A549 (cell line): ENCODE measurements at regions of chr22 and their contacts with region 1.

Region 1: DNA sequence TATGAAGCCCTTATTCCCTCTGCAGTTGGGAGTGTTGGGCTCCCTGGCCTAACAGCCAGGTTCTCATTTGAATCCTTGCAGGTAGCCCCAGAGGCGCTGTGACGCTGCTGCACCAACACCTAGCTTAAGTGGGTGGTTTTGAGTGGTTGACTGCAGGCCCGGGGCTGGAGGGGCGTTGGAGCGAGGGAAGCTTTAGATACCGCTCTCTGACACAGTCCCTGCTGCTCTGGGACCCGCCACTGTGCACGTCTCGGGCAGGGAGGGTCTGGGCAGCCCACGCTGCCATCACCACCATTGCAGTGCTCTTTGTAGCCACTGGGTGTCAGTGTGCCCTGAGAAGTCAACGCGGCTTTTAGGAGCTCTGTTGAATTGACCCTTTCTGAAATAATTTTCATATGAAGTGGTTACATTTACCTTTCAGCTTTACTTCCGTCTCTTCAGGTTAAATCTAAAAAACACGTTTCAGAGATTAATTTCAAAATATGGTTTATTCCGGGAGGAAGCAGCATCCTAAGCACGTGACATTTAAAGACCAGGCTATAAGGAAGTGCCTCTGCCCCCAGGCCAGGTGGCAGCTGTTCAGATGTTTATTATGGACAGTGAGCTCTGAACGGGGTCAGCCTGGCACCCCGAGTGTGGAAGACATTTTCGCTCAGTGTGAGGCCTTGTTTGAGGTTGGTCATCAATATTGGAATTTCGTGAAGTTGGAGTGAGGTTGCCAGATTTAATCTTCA is 30.9 kb upstream of the PARVB start:
- DNase-seq: peak; percentile 43 to 45
- ATAC-seq: peak; percentile 83 to 92; a peak in 5 of 6 replicates
- H3K4me3 ChIP-seq: no peak overlapping the region
- H3K27ac ChIP-seq: no peak overlapping the region
- H3K4me1 ChIP-seq: no peaks in the 10 kb centered on the region
- CTCF ChIP-seq: peak; percentile 84
- EP300 ChIP-seq: no peak
- POLR2A ChIP-seq: no peak
- RAD21 ChIP-seq: peak; percentile 82 to 85

Region 2: GRCh38 chr22:43910178-43910695 is 83.0 kb before region 1 on chr22:
- CTCF ChIA-PET with region 1: no interaction called
- POLR2A ChIA-PET with region 1: no interaction called
- DNase-seq: no peak
- ATAC-seq: no peak
- H3K4me3 ChIP-seq: no peak overlapping the region
- H3K27ac ChIP-seq: no peak overlapping the region
- H3K4me1 ChIP-seq: peaks cover 2% of the 10 kb centered on the region; the same call in 2 of the 3 replicates
- CTCF ChIP-seq: no peak
- EP300 ChIP-seq: no peak
- POLR2A ChIP-seq: no peak
- RAD21 ChIP-seq: no peak

Region 3: GRCh38 chr22:43928468-43928867 is 64.7 kb before region 1 on chr22:
- CTCF ChIA-PET with region 1: no interaction called
- POLR2A ChIA-PET with region 1: no interaction called
- DNase-seq: no peak
- ATAC-seq: no peak
- H3K4me3 ChIP-seq: no peak overlapping the region
- H3K27ac ChIP-seq: no peak overlapping the region
- H3K4me1 ChIP-seq: no peaks in the 10 kb centered on the region
- CTCF ChIP-seq: no peak
- EP300 ChIP-seq: no peak
- POLR2A ChIP-seq: no peak
- RAD21 ChIP-seq: no peak

Region 4: GRCh38 chr22:44003405-44004103 is 10.4 kb after region 1 on chr22:
- CTCF ChIA-PET with region 1: interaction called, 28 read pairs
- POLR2A ChIA-PET with region 1: no interaction called
- DNase-seq: no peak
- ATAC-seq: peak; percentile 62 to 83; a peak in 4 of 6 replicates
- H3K4me3 ChIP-seq: no peak overlapping the region
- H3K27ac ChIP-seq: no peak overlapping the region
- H3K4me1 ChIP-seq: no peaks in the 10 kb centered on the region
- CTCF ChIP-seq: no peak
- EP300 ChIP-seq: no peak
- POLR2A ChIP-seq: no peak
- RAD21 ChIP-seq: no peak; a peak in 1 of 5 replicates

Region 5: DNA sequence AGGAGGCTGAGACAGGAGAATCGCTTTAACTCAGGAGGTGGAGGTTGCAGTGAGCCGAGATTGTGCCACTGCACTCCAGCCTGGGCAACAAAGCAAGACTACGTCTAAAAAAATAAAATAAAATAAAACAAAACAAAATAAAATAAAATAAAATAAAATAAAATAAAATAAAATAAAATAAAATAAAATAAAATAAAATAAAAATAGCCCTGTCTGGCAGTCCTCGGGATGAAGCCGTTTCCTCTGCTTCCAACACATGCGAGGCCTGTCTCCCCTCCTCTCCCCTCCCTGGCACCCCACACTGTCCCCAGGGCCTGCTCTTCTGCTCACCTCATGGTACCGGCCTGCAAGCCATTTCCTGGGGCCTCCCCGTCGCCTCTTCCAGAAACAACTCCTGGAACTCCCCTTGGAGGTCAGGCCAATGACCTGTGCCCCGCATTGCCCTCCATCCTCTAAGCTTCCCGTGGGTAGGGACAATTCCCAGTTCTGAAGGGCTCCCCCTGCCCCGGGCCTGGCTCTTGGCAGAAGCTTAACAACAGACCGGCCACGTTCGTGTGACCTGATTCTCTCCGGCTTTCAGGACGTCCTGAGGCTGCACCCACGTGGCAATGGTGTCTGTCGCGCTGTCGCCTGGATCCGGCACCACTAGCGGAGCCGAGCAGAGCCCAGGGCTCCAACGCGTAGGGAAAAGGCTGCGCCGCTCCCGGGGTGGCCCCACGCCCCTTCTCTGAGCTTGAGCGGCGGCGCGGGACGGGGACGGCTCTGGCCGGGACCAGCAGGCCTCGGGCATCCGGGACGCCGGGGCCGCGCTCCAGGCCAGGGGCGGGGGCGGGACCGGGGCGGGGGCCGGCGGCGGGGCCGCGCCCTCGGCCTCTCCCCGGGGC is 30.5 kb after region 1 on chr22:
- CTCF ChIA-PET with region 1: interaction called, 24 read pairs
- POLR2A ChIA-PET with region 1: no interaction called
- DNase-seq: peak in 1 of 2 experiments; percentile 51
- ATAC-seq: peak; percentile 80 to 84
- H3K4me3 ChIP-seq: peak overlapping the region; percentile 95
- H3K27ac ChIP-seq: peak overlapping the region; percentile 98 to 100
- H3K4me1 ChIP-seq: peaks cover 35% of the 10 kb centered on the region
- CTCF ChIP-seq: no peak
- EP300 ChIP-seq: no peak
- POLR2A ChIP-seq: peak; percentile 51
- RAD21 ChIP-seq: no peak

Region 6: DNA sequence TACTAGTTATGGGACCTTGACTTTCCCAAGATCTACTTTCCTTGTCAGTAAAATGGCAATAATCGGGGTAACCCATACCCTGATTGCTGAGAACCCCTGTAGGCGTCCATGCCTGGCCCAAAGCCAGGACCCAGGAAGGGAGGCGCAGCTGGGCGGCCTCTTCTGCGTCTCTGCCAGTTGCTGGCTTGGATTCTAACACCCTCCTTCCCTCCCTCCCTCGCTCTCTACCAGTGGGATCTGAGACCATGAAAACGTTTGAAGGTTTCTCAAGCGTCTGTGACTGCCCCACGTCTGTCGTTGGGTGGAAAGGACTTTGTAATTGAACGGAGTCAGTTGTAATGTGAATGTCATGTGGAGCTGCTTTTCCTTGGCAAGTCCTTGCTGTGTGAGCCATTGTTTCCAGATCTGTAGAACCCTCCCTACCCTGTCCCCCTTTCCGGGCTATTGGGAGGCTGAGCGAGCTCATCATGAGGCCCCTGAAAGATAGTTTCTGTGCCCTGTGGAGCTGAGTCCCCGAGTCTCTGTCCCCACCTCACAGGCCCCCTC is 78.7 kb after region 1 on chr22:
- CTCF ChIA-PET with region 1: interaction called, 12 read pairs
- POLR2A ChIA-PET with region 1: no interaction called
- DNase-seq: no peak
- ATAC-seq: no peak
- H3K4me3 ChIP-seq: no peak overlapping the region
- H3K27ac ChIP-seq: no peak overlapping the region
- H3K4me1 ChIP-seq: no peaks in the 10 kb centered on the region
- CTCF ChIP-seq: no peak
- EP300 ChIP-seq: no peak
- POLR2A ChIP-seq: no peak
- RAD21 ChIP-seq: no peak

Region 7: GRCh38 chr22:44098083-44098739 is 105.0 kb after region 1 on chr22:
- CTCF ChIA-PET with region 1: interaction called, 12 read pairs
- POLR2A ChIA-PET with region 1: no interaction called
- DNase-seq: no peak
- ATAC-seq: no peak
- H3K4me3 ChIP-seq: no peak overlapping the region
- H3K27ac ChIP-seq: no peak overlapping the region
- H3K4me1 ChIP-seq: no peaks in the 10 kb centered on the region
- CTCF ChIP-seq: no peak
- EP300 ChIP-seq: no peak
- POLR2A ChIP-seq: no peak
- RAD21 ChIP-seq: no peak